ENCODE measurements at regions of chr1 and their contacts with region 1.

Region 1: DNA sequence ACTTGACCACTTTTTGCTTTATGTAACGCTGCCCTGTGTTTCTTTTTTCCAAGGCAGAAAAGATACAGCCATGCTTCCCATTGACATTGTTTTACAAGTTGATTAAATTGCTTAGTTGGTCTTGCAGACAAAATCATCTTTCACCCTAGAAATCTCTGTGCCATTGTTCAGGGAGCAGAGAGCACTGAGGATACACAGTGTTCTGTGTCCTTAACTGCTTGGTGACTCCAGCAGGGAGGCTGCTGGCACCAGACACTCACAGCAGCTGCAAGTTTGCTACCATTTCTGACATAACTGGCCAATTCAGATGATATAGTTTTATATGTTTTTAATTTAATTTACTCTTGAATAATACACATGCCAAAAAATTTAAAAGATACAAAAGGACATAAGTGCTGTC is 118.7 kb downstream of the RGS2 start:
- DNase-seq: no peak
- H3K4me3 Mint-ChIP-seq: no peak overlapping the region
- H3K27ac Mint-ChIP-seq: no peak overlapping the region
- H3K4me1 Mint-ChIP-seq: no peaks in the 10 kb centered on the region
- H3K27me3 Mint-ChIP-seq: peaks cover 13% of the 10 kb centered on the region

Region 2: DNA sequence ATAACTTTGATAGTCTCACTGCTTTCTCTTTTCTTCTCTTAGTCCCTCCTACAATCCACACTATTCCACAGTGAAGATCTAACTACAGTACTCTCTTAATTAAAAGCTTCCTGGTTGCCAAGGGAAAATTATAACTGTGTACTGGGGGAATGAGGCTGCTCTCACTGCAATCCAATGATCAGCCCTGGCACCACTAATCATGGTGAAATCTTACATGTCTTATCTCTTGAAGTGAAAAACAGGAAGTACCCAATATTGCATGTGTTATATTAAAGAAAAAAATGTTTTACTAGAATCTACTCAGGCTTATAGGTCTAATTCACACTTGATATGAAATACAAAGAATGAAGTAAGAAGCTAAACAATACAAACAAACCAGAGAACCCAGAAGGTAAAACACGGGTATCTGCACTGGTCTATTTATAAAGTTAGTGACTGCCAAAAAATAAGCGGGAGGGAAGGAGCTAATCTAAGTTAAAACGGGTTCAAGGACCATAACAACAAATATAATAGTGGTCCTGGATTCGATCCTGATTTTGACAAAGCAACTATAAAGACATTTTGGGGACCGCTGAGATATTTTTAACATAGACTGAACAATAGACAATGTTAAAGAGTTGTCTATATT is 61.1 kb before region 1 on chr1:
- intact Hi-C with region 1: loop called (anchors 1 kb)
- DNase-seq: no peak
- H3K4me3 Mint-ChIP-seq: no peak overlapping the region
- H3K27ac Mint-ChIP-seq: no peak overlapping the region
- H3K4me1 Mint-ChIP-seq: peaks cover 3% of the 10 kb centered on the region
- H3K27me3 Mint-ChIP-seq: peaks cover under 1% of the 10 kb centered on the region

Region 3: DNA sequence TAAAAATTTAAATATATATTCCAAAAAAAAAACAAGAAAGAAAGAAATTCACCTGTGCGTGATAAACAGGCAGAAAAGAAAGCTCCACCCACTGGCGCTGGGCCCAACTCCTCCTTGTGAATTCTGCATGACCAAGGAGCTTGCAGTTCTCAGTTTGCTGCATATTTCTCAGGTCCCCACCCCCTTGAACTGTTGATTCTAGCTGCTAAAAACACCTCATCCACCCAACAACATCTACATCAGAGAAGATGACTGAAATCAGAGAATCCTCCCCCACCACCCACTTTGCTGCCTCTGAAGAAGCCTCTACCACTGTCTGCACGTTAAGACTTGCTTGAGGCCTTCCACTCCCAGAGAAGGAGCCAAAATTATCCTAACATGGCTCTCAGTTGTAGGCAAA is 13.8 kb before region 1 on chr1:
- intact Hi-C with region 1: loop called (anchors 2 kb)
- DNase-seq: no peak
- H3K4me3 Mint-ChIP-seq: no peak overlapping the region
- H3K27ac Mint-ChIP-seq: no peak overlapping the region
- H3K4me1 Mint-ChIP-seq: no peaks in the 10 kb centered on the region
- H3K27me3 Mint-ChIP-seq: no peaks in the 10 kb centered on the region

Measured in activated T-helper 2 cell treated with anti-CD3 and anti-CD28 coated beads, Interferon-gamma antibody, Interleukin-2, Interleukin-4, amounts not matched to agents 10 μg/mL and 5 μg/mL and 100 μg/mL, durations not matched to agents 14 hours and 24 hours and 36 hours (primary cell).